ENCODE measurements at regions of chr21 and their contacts with region 1.

Region 1: DNA sequence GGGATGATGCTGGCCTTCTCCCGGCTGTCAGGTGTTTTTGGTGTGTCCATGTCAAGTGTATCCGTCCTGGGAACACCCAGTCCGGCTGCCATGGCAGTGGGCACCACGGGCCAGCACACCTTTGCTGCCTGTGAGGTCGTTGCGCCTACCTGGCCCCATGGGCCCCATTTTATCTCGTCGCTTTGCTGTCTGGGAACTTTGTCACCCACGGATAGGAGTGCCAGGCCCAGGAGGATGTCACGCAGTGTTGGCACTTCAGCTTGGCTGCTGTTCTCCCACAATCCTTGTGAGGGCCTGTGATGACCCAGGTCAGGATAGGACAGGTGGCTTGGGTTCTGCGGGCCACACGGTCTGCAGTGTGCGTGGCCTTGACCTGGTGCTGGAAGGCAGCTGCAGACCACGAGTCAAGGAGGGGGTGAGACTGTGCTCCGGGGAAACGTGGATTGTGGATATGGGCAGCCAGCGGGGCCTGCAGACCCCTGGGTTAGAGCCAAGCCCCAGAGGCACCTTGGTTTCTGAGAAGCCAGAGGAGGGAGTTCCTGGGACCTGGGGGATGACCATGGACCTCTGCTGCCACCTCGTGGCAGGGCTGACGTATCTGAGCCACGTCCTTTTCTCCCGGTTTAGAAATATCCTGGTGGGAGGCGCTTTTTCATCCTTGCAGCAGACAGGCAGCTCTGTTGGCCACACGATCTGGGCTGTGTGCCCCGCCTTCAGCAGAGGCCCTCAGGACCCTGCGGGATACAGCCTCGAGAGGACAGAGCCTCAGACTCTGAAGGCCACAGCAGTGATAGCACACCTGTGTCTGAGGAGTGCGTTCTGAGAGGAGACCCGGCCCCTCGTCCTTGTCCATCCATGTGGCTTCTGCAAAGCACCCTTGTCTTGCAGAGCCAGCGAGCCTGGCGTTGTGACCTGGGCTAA is 161.1 kb upstream of the COL6A1 start:
- DNase-seq: peak; percentile 93
- H3K4me3 Mint-ChIP-seq: peak overlapping the region; percentile 47
- H3K27ac Mint-ChIP-seq: peak overlapping the region; percentile 81
- H3K4me1 Mint-ChIP-seq: peaks cover 40% of the 10 kb centered on the region
- H3K27me3 Mint-ChIP-seq: no peaks in the 10 kb centered on the region

Region 2: GRCh38 chr21:45152265-45152746 is 668.1 kb before region 1 on chr21:
- intact Hi-C with region 1: loop called (anchors 5 kb)
- DNase-seq: peak; percentile 91
- H3K4me3 Mint-ChIP-seq: peak overlapping the region; percentile 75
- H3K27ac Mint-ChIP-seq: peak overlapping the region; percentile 25
- H3K4me1 Mint-ChIP-seq: peaks cover 32% of the 10 kb centered on the region
- H3K27me3 Mint-ChIP-seq: no peaks in the 10 kb centered on the region

Region 3: DNA sequence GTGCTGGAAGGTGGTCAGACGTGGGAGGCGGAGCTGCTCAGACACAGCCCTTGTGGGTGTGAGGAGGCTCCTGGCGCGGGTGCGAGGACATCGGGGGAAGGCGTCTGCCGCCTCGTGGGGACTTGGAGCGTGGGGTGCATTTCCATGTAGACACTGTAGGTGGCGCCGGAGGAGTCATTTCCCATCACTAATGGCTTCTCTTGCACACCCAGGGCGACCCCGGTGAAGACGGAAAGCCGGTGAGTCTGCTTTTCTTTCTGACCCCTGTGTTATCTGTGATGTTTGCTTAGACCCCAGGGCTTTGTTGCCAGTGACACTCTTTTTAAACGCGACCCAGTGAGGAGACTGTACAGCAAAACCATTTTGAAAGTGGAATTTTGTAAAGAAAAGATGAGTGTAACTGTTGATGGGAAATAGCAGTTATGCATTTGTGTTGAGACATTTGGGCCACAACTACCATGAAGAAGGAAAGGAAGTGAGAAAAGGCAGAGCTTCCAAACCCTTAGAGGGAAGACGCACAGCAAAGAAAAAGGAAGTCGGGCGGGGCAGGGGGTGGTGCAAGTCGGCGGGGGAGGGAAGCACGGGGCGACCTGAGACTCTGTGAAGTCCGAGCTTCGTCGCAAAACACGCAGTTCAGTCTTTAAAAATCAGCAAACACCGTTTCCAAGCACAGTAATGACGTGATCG is 342.2 kb before region 1 on chr21:
- intact Hi-C with region 1: loop called (anchors 1 kb)
- DNase-seq: peak; percentile 93
- H3K4me3 Mint-ChIP-seq: peak overlapping the region; percentile 82
- H3K27ac Mint-ChIP-seq: peak overlapping the region; percentile 98
- H3K4me1 Mint-ChIP-seq: peaks cover 24% of the 10 kb centered on the region
- H3K27me3 Mint-ChIP-seq: no peaks in the 10 kb centered on the region

Region 4: GRCh38 chr21:45596704-45597318 is 223.6 kb before region 1 on chr21:
- intact Hi-C with region 1: loop called (anchors 1 kb)
- DNase-seq: peak; percentile 95
- H3K4me3 Mint-ChIP-seq: no peak overlapping the region
- H3K27ac Mint-ChIP-seq: no peak overlapping the region
- H3K4me1 Mint-ChIP-seq: peaks cover 19% of the 10 kb centered on the region
- H3K27me3 Mint-ChIP-seq: no peaks in the 10 kb centered on the region

Region 5: DNA sequence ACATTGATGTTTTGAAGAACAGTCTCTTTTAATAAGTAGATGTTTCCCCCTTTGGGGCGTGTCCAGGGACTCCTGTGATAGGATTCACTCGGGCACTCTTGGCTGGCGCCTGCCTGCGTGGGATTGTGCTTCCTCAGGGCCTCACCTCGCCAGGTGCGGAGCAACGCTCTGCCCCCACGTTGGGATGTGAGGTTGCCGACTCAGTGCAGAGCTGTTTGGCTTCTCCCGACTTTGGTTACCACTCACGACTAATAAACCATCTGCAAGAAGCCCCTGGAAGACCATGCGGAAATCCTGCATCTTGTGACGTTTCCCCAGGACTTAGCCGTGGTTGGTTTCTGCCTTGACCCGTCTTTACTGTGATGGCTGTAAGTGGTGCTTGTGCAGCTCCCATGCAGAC is 70.5 kb before region 1 on chr21:
- intact Hi-C with region 1: no loop called
- DNase-seq: peak; percentile 53
- H3K4me3 Mint-ChIP-seq: no peak overlapping the region
- H3K27ac Mint-ChIP-seq: no peak overlapping the region
- H3K4me1 Mint-ChIP-seq: no peaks in the 10 kb centered on the region
- H3K27me3 Mint-ChIP-seq: no peaks in the 10 kb centered on the region

Region 6: DNA sequence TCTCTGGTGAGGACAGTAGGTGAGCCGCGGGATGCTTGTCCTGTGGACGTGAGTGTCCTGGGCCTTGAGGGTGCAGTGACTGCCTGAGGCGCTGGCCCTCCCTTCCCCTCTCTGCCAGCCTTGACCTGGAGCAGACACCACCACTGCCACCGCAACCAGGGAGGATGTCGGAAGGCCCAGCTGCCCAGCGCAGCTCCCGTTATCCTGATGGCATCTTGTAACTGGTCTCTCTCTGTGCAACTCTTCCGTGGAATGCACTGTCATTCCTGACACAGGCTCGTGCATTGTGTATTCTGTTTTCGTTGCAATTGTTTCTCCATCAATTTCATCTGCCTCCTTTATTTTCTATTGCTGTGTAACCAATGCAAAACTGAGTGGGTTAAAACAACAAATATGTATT is 58.7 kb before region 1 on chr21:
- intact Hi-C with region 1: no loop called
- DNase-seq: no peak
- H3K4me3 Mint-ChIP-seq: no peak overlapping the region
- H3K27ac Mint-ChIP-seq: no peak overlapping the region
- H3K4me1 Mint-ChIP-seq: peaks cover 6% of the 10 kb centered on the region
- H3K27me3 Mint-ChIP-seq: no peaks in the 10 kb centered on the region

Region 7: GRCh38 chr21:45886610-45887026 is 66.2 kb after region 1 on chr21:
- intact Hi-C with region 1: loop called (anchors 1 kb)
- DNase-seq: peak; percentile 67
- H3K4me3 Mint-ChIP-seq: no peak overlapping the region
- H3K27ac Mint-ChIP-seq: peak overlapping the region; percentile 10
- H3K4me1 Mint-ChIP-seq: peaks cover 24% of the 10 kb centered on the region
- H3K27me3 Mint-ChIP-seq: peaks cover 15% of the 10 kb centered on the region

Measured in activated CD4-positive, alpha-beta T cell treated with anti-CD3 and anti-CD28 coated beads, Interleukin-2, amount 10 ng/mL, durations not matched to agents 24 days and 14 days (primary cell).